ENCODE measurements at regions of chr14 and their contacts with region 1.

Region 1: GRCh38 chr14:55270832-55271565 is at the start of gene FBXO34:
- DNase-seq: peak; percentile 100
- ATAC-seq: peak; percentile 89
- H3K4me3 Mint-ChIP-seq: peak within 1 kb of the TSS; percentile 90
- H3K27ac Mint-ChIP-seq: peak within 1 kb of the TSS; percentile 87
- H3K4me1 Mint-ChIP-seq: peaks cover 34% of the 10 kb centered on the region
- H3K27me3 Mint-ChIP-seq: no peaks in the 10 kb centered on the region
- CTCF ChIP-seq: peak; percentile 94
- total RNA-seq, gene FBXO34: 19.7 and 20.4 TPM in 2 replicates

Region 2: DNA sequence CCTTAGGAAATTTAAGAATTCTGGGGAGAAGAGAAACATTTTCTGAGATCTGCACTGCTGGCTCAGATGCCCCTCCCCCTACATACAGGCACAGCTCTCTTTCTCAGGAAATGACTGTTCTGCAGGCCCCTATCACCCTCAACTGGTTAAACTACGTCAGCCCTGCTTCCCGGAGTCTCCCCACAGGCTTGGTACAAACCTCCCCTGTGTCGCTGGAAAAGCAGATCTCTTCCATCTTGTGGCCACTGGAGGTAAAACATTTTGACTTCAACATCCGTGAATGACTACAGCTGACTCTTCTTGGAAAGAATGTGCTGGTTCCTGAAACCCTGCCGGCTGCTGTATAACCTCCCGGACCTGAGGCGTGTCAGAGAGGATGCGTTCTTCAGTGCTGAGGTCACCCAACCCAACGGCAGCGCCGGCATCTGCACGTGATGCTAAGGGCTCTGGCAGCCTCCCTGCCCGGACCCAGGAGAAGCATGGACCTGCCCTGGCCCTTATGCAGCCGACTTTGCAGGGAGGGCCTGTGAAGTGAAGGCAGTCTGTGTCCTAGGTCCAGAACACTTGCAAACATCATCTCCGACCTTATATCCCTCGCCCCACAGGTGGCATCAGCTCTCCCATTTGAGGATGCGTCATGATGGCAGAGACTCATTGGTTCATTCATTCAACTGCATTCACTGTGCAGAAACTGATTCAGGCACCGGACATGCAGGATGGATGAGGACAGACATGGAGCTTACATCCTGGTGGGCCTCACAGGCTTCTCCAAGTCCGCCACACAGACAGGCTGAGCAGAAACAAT is 497.6 kb before region 1 on chr14:
- CTCF ChIA-PET with region 1: no interaction called
- POLR2A ChIA-PET with region 1: no interaction called
- intact Hi-C with region 1: loop called (anchors 10 kb)
- DNase-seq: no peak
- ATAC-seq: peak; percentile 32
- H3K4me3 Mint-ChIP-seq: peak overlapping the region; percentile 32
- H3K27ac Mint-ChIP-seq: peak overlapping the region; percentile 62
- H3K4me1 Mint-ChIP-seq: peaks cover 50% of the 10 kb centered on the region
- H3K27me3 Mint-ChIP-seq: no peaks in the 10 kb centered on the region
- CTCF ChIP-seq: no peak

Region 3: DNA sequence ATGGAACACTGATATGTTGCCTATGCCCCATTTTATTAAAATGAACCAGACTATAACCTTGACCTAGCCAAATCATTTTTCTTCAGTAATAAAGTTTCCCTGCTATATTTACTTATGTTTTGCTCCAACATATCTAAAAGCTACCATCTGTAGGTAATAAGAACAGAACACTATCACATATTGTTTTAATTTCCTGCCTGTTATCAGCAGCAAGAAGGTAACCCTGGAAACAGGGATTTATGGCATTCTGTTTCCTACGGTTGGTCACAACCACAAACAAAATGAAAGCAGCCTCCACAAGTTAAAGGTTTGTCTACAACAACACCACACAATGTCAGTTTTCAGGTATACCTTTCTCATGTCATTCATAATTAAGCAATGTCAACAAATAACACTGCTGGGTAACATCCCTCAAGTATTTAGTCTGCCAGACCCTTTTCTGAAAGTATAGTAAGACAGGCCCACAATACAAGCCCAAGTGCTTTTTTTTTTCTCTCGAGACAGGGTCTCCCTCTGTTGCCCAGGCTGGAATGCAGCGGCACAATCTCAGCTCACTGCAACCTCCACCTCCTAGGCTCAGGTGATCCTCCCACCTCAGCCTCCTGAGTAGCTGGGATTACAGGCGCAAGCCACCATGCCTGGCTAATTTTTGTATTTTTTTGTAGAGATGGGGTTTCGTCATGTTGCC is 393.8 kb before region 1 on chr14:
- CTCF ChIA-PET with region 1: no interaction called
- POLR2A ChIA-PET with region 1: no interaction called
- intact Hi-C with region 1: no loop called
- DNase-seq: no peak
- ATAC-seq: no peak
- H3K4me3 Mint-ChIP-seq: no peak overlapping the region
- H3K27ac Mint-ChIP-seq: no peak overlapping the region
- H3K4me1 Mint-ChIP-seq: peaks cover 19% of the 10 kb centered on the region
- H3K27me3 Mint-ChIP-seq: no peaks in the 10 kb centered on the region
- CTCF ChIP-seq: no peak

Region 4: GRCh38 chr14:55071870-55072640 is 198.9 kb before region 1 on chr14:
- CTCF ChIA-PET with region 1: no interaction called
- POLR2A ChIA-PET with region 1: interaction called, 4 read pairs
- intact Hi-C with region 1: loop called (anchors 1 kb)
- DNase-seq: peak; percentile 47
- ATAC-seq: peak; percentile 77
- H3K4me3 Mint-ChIP-seq: peak overlapping the region; percentile 79
- H3K27ac Mint-ChIP-seq: peak overlapping the region; percentile 98
- H3K4me1 Mint-ChIP-seq: peaks cover 75% of the 10 kb centered on the region
- H3K27me3 Mint-ChIP-seq: no peaks in the 10 kb centered on the region
- CTCF ChIP-seq: no peak

Region 5: DNA sequence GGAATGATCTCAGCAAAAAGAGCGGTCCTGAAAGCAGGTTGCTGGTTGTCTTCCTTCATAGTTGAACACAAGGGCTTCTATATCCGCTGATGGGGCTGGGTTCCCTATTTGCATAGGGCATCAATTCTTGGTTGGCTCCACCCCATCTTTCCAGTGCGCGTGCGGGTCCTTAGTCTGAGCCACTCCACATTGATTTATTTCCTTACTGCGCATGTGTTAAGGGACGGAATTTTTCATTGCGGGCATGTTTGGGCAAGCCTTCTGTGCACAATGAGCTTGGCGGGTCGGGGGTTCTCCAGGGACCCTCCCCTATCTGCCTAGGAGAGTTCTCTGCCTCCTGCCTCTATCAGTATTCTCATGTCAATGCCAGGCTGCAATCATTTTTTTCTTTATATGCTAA is 58.4 kb before region 1 on chr14:
- CTCF ChIA-PET with region 1: no interaction called
- POLR2A ChIA-PET with region 1: no interaction called
- intact Hi-C with region 1: loop called (anchors 1 kb)
- DNase-seq: no peak
- ATAC-seq: no peak
- H3K4me3 Mint-ChIP-seq: no peak overlapping the region
- H3K27ac Mint-ChIP-seq: no peak overlapping the region
- H3K4me1 Mint-ChIP-seq: peaks cover 2% of the 10 kb centered on the region
- H3K27me3 Mint-ChIP-seq: no peaks in the 10 kb centered on the region
- CTCF ChIP-seq: no peak

Region 6: DNA sequence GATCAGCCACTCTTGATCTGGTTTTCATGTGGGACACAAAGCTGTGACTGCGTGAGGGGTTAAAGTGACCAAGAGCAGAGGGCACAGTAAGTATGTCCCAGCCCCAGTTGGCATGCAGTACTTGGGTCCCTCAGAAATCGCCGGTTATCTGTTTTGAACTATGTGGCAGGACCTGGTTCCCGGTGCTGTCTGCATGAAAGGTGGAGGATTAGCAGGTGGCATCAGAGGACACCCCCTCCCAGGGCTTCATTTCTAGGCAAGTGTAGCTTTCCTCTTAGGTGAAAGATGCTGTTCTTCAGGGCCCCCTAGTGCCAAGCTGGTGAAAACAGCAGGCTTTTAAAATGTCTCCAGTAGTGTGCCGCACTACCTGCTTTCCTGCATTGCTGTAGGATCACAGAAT is 83.5 kb after region 1 on chr14:
- CTCF ChIA-PET with region 1: interaction called, 50 read pairs
- POLR2A ChIA-PET with region 1: interaction called, 6 read pairs
- intact Hi-C with region 1: loop called (anchors 1 kb)
- DNase-seq: no peak
- ATAC-seq: peak; percentile 84
- H3K4me3 Mint-ChIP-seq: no peak overlapping the region
- H3K27ac Mint-ChIP-seq: no peak overlapping the region
- H3K4me1 Mint-ChIP-seq: peaks cover 10% of the 10 kb centered on the region
- H3K27me3 Mint-ChIP-seq: no peaks in the 10 kb centered on the region
- CTCF ChIP-seq: no peak

Region 7: GRCh38 chr14:55430024-55430690 is 159.2 kb after region 1 on chr14:
- CTCF ChIA-PET with region 1: no interaction called
- POLR2A ChIA-PET with region 1: no interaction called
- intact Hi-C with region 1: loop called (anchors 1 kb)
- DNase-seq: no peak
- ATAC-seq: peak; percentile 61
- H3K4me3 Mint-ChIP-seq: no peak overlapping the region
- H3K27ac Mint-ChIP-seq: no peak overlapping the region
- H3K4me1 Mint-ChIP-seq: peaks cover 7% of the 10 kb centered on the region
- H3K27me3 Mint-ChIP-seq: no peaks in the 10 kb centered on the region
- CTCF ChIP-seq: no peak

Region 8: GRCh38 chr14:57268161-57269069 is 1997.4 kb after region 1 on chr14 and contains the starts of genes AP5M1 and EXOC5:
- CTCF ChIA-PET with region 1: no interaction called
- POLR2A ChIA-PET with region 1: no interaction called
- intact Hi-C with region 1: loop called (anchors 1 kb)
- DNase-seq: peak; percentile 85
- ATAC-seq: peak; percentile 83
- H3K4me3 Mint-ChIP-seq: peak within 1 kb of the TSS; percentile 98
- H3K27ac Mint-ChIP-seq: peak within 1 kb of the TSS; percentile 98
- H3K4me1 Mint-ChIP-seq: peaks cover 61% of the 10 kb centered on the region
- H3K27me3 Mint-ChIP-seq: no peaks in the 10 kb centered on the region
- CTCF ChIP-seq: no peak
- total RNA-seq, gene AP5M1: 48.4 and 54.6 TPM in 2 replicates
- total RNA-seq, gene EXOC5: 51.3 and 53.8 TPM in 2 replicates

Measured in activated B cell treated with CpG ODN at 0.5 μM for 24 hours (primary cell).